ENCODE measurements at regions of chr12 and their contacts with region 1.

Region 1: DNA sequence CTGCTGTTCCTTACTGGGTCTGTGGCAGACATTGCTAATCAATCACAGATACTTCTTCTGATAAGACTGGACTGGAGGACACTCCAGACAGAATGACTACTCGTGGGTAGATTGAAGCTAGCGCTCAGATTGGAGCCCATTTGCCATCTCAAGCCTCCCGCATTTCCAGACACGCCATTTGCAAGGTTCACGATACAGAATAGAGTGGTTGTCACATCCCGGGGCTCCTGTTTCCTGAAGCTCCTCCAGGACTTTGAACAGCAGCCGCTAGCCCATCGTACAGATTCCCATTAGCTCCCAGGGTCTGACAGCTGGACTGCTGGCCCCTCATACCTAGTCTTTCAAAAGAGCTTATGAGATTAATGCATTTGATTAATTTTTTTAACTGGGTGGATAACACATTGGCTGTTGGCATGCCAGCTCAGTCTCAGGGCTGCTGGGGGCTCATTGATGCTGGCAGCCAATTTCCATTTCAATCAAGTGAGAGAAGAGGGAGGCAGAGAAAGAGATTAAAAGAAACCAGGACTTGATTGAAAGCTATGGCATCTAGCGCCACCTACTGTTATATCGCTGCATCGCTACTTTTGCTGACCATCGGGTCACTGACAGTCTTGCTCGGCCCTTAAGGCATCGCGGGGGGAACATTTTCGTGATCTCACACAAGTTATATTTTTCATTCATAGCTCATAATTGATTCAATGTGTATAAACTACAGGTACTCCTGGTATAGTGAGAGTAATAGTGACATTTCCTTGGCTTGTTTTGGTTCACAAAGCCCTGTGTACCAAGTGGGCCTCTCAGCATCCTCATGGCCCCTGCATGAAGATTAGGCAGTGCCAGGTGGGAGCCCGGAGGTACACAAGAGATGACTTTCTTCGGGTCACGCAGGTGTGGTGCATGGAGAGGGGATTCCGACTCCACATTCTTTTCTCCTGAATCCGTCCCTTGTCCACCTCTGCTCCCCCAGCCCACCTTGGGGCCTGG is 78.6 kb downstream of the CCDC60 start:
- DNase-seq: peak; percentile 62
- H3K4me3 Mint-ChIP-seq: no peak overlapping the region
- H3K27ac Mint-ChIP-seq: no peak overlapping the region
- H3K4me1 Mint-ChIP-seq: no peaks in the 10 kb centered on the region
- H3K27me3 Mint-ChIP-seq: peaks cover 8% of the 10 kb centered on the region

Region 2: DNA sequence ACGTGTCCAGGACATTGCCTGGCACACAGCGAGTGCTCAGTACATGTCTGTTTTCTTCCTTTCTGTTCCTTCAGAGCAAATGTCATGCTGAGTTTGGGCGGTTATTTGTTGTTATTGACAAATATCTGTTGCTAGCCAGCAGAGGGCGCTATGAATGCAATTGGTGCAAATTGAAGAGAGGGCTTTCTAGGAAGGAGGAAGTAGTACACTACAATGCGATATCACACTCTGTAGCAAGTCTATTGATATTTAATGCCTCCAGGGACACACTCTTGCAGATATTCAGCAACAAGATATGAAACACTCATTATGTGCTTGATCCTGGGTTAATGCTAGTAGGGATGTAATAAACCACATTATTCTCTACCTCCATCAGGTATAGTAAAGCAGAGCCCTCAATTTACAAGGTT is 699.0 kb before region 1 on chr12:
- CTCF ChIA-PET with region 1: no interaction called
- intact Hi-C with region 1: loop called (anchors 5 kb)
- DNase-seq: peak; percentile 43
- H3K4me3 Mint-ChIP-seq: no peak overlapping the region
- H3K27ac Mint-ChIP-seq: no peak overlapping the region
- H3K4me1 Mint-ChIP-seq: no peaks in the 10 kb centered on the region
- H3K27me3 Mint-ChIP-seq: no peaks in the 10 kb centered on the region

Region 3: GRCh38 chr12:118850244-118850825 is 562.8 kb before region 1 on chr12:
- CTCF ChIA-PET with region 1: no interaction called
- intact Hi-C with region 1: loop called (anchors 10 kb)
- DNase-seq: peak; percentile 28
- H3K4me3 Mint-ChIP-seq: no peak overlapping the region
- H3K27ac Mint-ChIP-seq: no peak overlapping the region
- H3K4me1 Mint-ChIP-seq: no peaks in the 10 kb centered on the region
- H3K27me3 Mint-ChIP-seq: peaks cover 2% of the 10 kb centered on the region

Region 4: GRCh38 chr12:118979763-118980406 is 433.2 kb before region 1 on chr12:
- CTCF ChIA-PET with region 1: no interaction called
- intact Hi-C with region 1: loop called (anchors 1 kb)
- DNase-seq: peak; percentile 39
- H3K4me3 Mint-ChIP-seq: no peak overlapping the region
- H3K27ac Mint-ChIP-seq: no peak overlapping the region
- H3K4me1 Mint-ChIP-seq: no peaks in the 10 kb centered on the region
- H3K27me3 Mint-ChIP-seq: peaks cover 40% of the 10 kb centered on the region

Region 5: DNA sequence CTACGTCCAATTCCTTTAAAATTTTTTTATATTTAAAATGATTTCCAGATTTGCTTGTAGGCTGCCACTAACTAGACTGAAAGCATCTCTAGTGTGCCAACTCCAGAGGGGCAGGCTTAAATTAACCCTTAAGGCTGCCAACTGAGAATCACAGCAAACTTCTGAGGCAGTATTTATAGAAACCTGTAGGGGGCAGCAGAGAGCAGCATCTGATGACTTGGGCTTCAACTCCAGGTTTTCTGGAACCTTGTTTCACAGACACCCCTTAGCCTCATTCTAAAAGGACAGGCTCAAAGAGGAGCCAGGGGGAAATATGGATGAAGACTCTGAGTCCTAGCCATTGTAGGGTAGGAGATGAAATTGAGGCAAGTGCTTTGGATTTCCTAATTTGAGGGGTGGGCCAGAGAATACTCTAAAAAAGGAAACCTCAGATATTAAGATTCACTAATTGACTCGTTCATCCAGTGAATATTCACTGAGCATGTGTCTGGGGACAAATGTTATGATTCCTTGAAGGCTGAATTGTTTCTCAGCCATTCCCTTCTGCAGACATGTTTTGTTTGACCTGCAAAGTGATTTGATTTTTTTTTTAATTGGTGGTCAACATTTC is 297.7 kb before region 1 on chr12:
- CTCF ChIA-PET with region 1: no interaction called
- intact Hi-C with region 1: loop called (anchors 1 kb)
- DNase-seq: peak; percentile 43
- H3K4me3 Mint-ChIP-seq: no peak overlapping the region
- H3K27ac Mint-ChIP-seq: no peak overlapping the region
- H3K4me1 Mint-ChIP-seq: no peaks in the 10 kb centered on the region
- H3K27me3 Mint-ChIP-seq: peaks cover 6% of the 10 kb centered on the region

Region 6: DNA sequence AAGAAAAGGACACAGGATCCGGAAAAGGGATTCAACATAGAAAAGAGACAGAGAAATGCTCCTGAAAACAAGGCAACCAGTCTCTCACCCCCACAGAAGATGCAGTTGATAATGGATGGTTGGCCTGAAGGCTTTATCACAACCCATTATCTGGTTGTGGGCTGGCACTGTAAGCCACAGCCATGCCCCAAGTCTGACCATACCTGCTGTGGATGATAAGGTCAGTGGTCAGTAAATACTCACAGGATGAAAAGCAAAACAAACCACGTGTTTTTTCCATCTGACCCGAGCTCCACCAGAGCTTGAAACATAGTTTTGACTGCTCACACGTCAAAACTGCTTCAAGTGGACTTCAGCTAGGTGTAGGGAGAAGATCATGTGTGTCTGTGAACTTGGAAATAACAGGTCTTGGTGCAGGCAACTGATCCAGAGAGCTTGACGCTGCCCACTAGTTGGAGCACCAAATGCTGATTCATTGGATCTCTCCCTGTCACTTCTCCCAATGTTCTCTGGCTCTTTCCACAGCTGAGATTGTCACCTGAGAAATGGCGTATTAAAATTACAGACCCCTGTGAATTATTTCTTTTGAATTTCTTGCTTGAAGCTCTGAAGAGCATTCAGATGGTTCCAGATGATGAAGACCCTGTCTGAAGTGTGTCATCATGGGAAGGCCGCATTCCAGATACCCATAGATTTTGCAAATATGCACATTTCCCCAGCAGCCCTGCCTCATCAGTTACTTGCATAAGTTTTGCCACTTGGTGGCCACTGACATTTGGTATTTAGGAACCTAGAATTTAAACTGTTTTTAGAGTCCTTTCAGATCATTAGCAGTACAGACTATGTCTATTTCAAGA is 189.0 kb after region 1 on chr12:
- CTCF ChIA-PET with region 1: no interaction called
- intact Hi-C with region 1: no loop called
- DNase-seq: no peak
- H3K4me3 Mint-ChIP-seq: no peak overlapping the region
- H3K27ac Mint-ChIP-seq: no peak overlapping the region
- H3K4me1 Mint-ChIP-seq: no peaks in the 10 kb centered on the region
- H3K27me3 Mint-ChIP-seq: peaks cover 16% of the 10 kb centered on the region